Left ventricle myocardium inferior (tissue), 1 donor: ENCODE measurements at regions of chr4 and their contacts with region 1.

Region 1: DNA sequence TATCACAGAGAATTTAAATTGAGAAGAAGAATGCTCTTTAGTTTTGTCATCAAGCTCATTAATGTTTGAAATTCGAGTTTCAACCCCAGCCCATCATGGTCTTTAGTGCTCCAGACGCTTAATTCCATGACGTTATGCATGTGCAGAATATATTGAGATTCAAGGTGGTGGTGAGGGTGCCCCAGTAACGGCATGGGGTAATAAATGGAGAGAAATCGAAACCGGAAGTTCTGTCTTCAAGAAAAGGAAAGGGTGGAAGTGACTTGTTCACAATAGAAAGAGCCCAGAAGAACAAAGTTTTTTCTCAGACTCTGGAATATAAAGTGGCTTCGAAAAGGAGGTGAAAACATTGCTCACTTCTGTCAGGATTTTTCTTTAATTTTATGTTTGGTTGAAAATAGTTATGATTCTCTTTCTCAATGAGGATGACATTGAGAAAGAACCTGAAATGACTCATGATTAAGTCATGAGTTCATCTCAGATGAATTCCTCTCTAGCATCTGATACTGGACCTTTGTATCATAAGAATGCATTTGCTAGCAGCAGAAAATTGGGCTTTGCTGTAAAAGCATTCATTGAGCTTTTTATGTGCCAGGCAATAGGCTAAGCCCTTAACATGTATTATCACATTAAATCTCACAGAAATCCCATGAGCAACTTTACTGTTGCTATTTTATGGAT is 779 bp upstream of the DDX60L start:
- DNase-seq: no peak
- H3K4me3 ChIP-seq: peak overlapping the region; percentile 83
- H3K27ac ChIP-seq: peak overlapping the region; percentile 93
- H3K4me1 ChIP-seq: peaks cover 33% of the 10 kb centered on the region
- H3K27me3 ChIP-seq: no peaks in the 10 kb centered on the region
- CTCF ChIP-seq: no peak

Region 2: DNA sequence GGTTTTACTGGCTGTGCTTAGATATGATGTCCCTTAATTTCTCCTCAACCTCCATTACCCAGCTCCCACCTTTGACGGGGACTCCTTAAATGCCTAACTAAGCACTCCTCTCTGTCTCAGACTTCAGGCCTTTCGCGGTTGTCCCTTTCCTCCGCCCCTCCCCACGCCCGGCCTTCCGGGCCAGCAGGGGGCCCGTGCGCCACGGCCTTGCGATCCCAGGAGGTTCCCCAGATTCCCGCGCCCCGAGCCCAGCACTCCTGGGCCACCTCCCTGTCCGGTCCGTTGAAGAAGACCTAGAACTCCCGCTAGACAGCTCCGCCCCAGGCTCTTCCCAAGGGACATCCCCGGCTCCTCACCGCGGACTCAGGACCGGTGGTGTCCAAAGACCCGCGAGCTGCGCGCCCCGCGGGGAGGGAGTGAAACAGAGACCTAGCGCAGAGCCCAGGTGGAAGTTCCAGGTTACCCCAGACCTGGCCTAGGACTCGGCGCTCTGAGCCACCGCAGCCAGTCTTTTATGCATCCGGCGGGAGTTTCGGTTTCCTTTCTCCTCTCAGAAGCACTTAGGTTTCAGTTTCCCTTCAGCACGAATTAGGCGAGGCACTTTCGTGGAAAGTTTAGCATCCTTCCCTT is 162.7 kb before region 1 on chr4 and contains the start of gene DDX60:
- intact Hi-C with region 1: loop called (anchors 5 kb)
- DNase-seq: peak; percentile 74
- H3K4me3 ChIP-seq: peak within 1 kb of the TSS; percentile 81
- H3K27ac ChIP-seq: peak within 1 kb of the TSS; percentile 96
- H3K4me1 ChIP-seq: peaks cover 27% of the 10 kb centered on the region
- H3K27me3 ChIP-seq: no peaks in the 10 kb centered on the region
- CTCF ChIP-seq: peak; percentile 73
- total RNA-seq, gene DDX60: 5.3 TPM

Region 3: DNA sequence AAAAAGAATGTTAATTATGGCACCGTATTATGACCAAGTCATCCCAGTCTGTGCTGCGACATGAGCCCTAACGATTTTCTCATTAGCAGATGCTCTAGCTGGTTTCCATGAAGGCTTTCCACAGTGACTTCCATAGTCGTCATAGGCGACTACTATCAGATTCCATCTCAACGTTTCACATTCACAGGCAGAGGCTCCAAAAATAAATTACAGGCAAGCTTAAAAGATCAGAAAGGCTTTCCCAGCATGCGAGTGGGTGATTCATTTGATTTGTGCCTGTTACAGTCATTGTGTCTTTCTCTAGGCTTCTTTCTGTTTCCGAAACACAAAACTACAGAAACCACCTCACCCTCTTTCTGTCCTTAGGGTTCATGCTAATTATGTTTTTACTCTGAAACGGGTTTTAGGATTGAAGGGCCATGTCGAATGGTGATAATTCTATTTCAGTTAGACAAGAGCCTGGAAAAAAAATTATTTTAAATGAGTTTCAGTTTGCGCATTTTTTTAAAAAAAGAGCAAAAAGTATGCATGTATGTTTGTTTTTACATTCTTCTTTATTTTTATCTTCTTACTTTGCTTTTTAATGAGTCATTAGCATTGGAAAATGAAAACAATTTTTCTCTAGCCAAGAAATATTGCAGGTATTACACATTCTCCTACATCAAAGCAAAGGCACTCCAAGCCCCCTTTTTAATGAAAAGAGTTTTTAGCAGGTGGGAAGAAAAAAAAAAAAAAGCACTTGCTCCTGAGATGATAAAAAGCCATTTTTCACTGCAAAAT is 59.2 kb after region 1 on chr4:
- intact Hi-C with region 1: no loop called
- DNase-seq: no peak
- H3K4me3 ChIP-seq: no peak overlapping the region
- H3K27ac ChIP-seq: no peak overlapping the region
- H3K4me1 ChIP-seq: peaks cover 37% of the 10 kb centered on the region
- H3K27me3 ChIP-seq: no peaks in the 10 kb centered on the region
- CTCF ChIP-seq: no peak